Endothelial cell of umbilical vein (primary cell): ENCODE measurements at regions of chr7 and their contacts with region 1.

Region 1: GRCh38 chr7:127585044-127585953 is at the start of gene GCC1:
- DNase-seq: peak; percentile 94
- H3K4me3 ChIP-seq: peak within 1 kb of the TSS; percentile 87 to 95 (median 94)
- H3K27ac ChIP-seq: peak within 1 kb of the TSS; percentile 60
- H3K4me1 ChIP-seq: peaks cover 37% of the 10 kb centered on the region
- H3K27me3 ChIP-seq: no peaks in the 10 kb centered on the region
- CTCF ChIP-seq: no peak
- POLR2A ChIP-seq: peak; percentile 91
- total RNA-seq, gene GCC1: 14.5 and 15.5 TPM in 2 replicates

Region 2: DNA sequence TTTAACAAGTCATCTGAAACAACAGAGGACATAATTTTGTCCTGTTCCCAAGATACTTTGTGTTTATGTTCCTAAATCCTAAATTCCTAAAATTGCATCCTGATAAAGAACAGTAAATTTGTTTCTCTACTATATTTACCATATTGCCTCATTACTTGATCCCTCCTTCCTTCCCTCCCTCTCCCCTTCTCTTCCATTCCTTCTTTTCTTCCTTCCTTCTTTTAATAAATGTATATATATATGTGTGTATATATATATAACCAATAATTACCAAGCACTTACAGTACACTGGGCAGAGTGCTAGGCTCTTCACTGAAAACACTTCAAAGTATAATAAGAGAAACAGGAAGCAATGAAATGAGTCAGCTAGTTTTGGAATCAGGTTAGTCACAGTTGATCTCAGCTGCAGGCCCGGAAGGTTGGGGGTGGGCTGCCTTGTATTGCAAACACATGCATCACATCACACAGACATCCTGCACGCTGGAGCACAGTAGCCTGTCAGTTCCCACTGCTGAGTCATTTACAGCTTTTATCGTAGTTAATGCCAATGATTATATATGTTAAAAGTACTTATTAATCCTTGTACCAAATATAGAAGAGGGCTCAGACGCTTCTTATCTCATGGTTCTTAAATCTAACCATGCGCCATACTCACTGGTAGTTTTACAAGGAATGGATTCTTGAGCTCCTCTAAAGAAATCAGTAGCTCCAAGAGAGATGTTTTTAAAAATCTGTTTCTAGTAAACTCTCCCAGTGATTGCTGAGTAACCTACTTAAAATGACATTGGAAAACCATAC is 884.3 kb before region 1 on chr7:
- CTCF ChIA-PET with region 1: no interaction called
- POLR2A ChIA-PET with region 1: no interaction called
- dilution Hi-C with region 1: no loop called
- intact Hi-C with region 1: loop called (anchors 2 kb)
- DNase-seq: peak; percentile 98
- H3K4me3 ChIP-seq: peak overlapping the region in 1 of 3 experiments; percentile 26
- H3K27ac ChIP-seq: peak overlapping the region; percentile 89
- H3K4me1 ChIP-seq: peaks cover 21% of the 10 kb centered on the region
- H3K27me3 ChIP-seq: no peaks in the 10 kb centered on the region
- CTCF ChIP-seq: no peak
- POLR2A ChIP-seq: peak; percentile 46

Region 3: GRCh38 chr7:127347567-127348246 is 237.6 kb before region 1 on chr7:
- CTCF ChIA-PET with region 1: interaction called, 4 read pairs
- POLR2A ChIA-PET with region 1: interaction called, 5 read pairs
- dilution Hi-C with region 1: no loop called
- intact Hi-C with region 1: loop called (anchors 5 kb)
- DNase-seq: peak; percentile 70
- H3K4me3 ChIP-seq: peak overlapping the region; percentile 29 to 63 (median 35)
- H3K27ac ChIP-seq: no peak overlapping the region
- H3K4me1 ChIP-seq: peaks cover 8% of the 10 kb centered on the region
- H3K27me3 ChIP-seq: no peaks in the 10 kb centered on the region
- CTCF ChIP-seq: peak; percentile 51 to 56
- POLR2A ChIP-seq: no peak

Region 4: GRCh38 chr7:127651556-127652332 is 66.4 kb after region 1 on chr7 and contains the start of gene SND1:
- CTCF ChIA-PET with region 1: interaction called, 4 read pairs
- POLR2A ChIA-PET with region 1: no interaction called
- dilution Hi-C with region 1: no loop called
- intact Hi-C with region 1: loop called (anchors 1 kb)
- DNase-seq: peak; percentile 98
- H3K4me3 ChIP-seq: peak within 1 kb of the TSS; percentile 50 to 94 (median 76)
- H3K27ac ChIP-seq: peak within 1 kb of the TSS; percentile 89
- H3K4me1 ChIP-seq: peaks cover 28% of the 10 kb centered on the region
- H3K27me3 ChIP-seq: peaks cover 2 to 3% of the 10 kb centered on the region in 2 experiments
- CTCF ChIP-seq: no peak
- POLR2A ChIP-seq: peak; percentile 88
- total RNA-seq, gene SND1: 234 and 249 TPM in 2 replicates

Region 5: GRCh38 chr7:128031901-128032604 is 446.8 kb after region 1 on chr7:
- CTCF ChIA-PET with region 1: interaction called, 3 read pairs
- POLR2A ChIA-PET with region 1: no interaction called
- dilution Hi-C with region 1: no loop called
- intact Hi-C with region 1: loop called (anchors 10 kb)
- DNase-seq: peak; percentile 85
- H3K4me3 ChIP-seq: peak overlapping the region in 2 of 3 experiments; percentile 8 to 45
- H3K27ac ChIP-seq: no peak overlapping the region
- H3K4me1 ChIP-seq: peaks cover 6% of the 10 kb centered on the region
- H3K27me3 ChIP-seq: no peaks in the 10 kb centered on the region
- CTCF ChIP-seq: peak; percentile 16 to 37
- POLR2A ChIP-seq: no peak